Transverse colon (tissue), 4 donors: ENCODE measurements at regions of chr5 and their contacts with region 1.

Region 1: GRCh38 chr5:142881076-142881783 is 111.1 kb downstream of the ARHGAP26 start:
- DNase-seq: no peak
- H3K4me3 ChIP-seq: no peak overlapping the region
- H3K27ac ChIP-seq: no peak overlapping the region
- H3K4me1 ChIP-seq: peaks cover 0 to 3% (median 0%) of the 10 kb centered on the region in 4 donors
- H3K27me3 ChIP-seq: no peaks in the 10 kb centered on the region
- CTCF ChIP-seq: no peak
- EP300 ChIP-seq: no peak
- POLR2A ChIP-seq: no peak

Region 2: GRCh38 chr5:142713121-142713706 is 168.0 kb before region 1 on chr5:
- in situ Hi-C with region 1: loop called in 1 of 4 experiments (anchors 10 kb)
- intact Hi-C with region 1: loop called (anchors 5 kb)
- DNase-seq: peak; percentile 92
- H3K4me3 ChIP-seq: peak overlapping the region in 3 of 4 donors; percentile 35 to 63 (median 41)
- H3K27ac ChIP-seq: peak overlapping the region; percentile 67 to 82 (median 72)
- H3K4me1 ChIP-seq: peaks cover 0 to 12% (median under 1%) of the 10 kb centered on the region in 4 donors
- H3K27me3 ChIP-seq: peaks cover 6% of the 10 kb centered on the region
- CTCF ChIP-seq: peak; percentile 93 to 98 (median 96)
- EP300 ChIP-seq: no peak
- POLR2A ChIP-seq: no peak

Region 3: GRCh38 chr5:142800776-142801494 is 80.3 kb before region 1 on chr5:
- in situ Hi-C with region 1: no loop called
- intact Hi-C with region 1: no loop called
- DNase-seq: no peak
- H3K4me3 ChIP-seq: no peak overlapping the region
- H3K27ac ChIP-seq: peak overlapping the region in 2 of 4 donors; percentile 26 to 44
- H3K4me1 ChIP-seq: peaks cover 0 to 58% (median 20%) of the 10 kb centered on the region in 4 donors
- H3K27me3 ChIP-seq: no peaks in the 10 kb centered on the region
- CTCF ChIP-seq: no peak
- EP300 ChIP-seq: no peak
- POLR2A ChIP-seq: no peak

Region 4: DNA sequence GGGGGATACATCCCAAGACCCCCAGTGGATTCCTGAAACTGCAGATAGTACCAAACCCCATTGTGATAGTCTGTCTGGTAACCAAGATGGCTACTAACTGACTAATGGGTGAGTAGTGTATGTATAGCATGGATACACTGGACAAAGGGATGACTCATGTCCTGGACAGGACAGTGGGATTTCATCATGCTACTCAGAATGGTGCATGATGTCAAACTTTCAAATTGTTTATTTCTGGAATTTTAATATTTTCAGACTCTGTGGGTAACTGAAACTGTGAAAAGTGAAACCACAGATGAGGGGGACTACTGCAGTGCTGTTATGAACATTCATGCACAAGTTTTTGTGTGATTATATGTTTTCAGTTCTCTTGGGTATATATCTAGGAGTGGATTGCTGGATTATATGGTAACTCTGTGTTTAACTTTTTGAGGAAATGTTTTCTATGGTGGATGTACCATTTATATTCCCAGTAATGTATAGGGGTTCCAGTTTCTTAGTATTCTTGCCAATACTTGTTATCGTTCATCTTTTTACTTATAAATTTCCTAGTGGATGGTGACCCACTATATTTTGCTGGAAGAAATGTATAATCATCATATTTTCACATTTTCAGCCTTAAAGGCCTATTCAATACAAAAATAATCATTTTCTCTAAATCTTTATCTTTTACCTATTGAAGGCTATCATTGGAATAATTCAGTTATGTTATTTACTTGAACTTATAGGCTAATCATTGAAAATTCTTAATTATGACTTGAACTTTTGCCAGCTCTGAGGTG is 381.4 kb after region 1 on chr5:
- in situ Hi-C with region 1: no loop called
- intact Hi-C with region 1: no loop called
- DNase-seq: no peak
- H3K4me3 ChIP-seq: no peak overlapping the region
- H3K27ac ChIP-seq: no peak overlapping the region
- H3K4me1 ChIP-seq: no peaks in the 10 kb centered on the region
- H3K27me3 ChIP-seq: no peaks in the 10 kb centered on the region
- CTCF ChIP-seq: no peak
- EP300 ChIP-seq: no peak
- POLR2A ChIP-seq: no peak